Activated CD8-positive, alpha-beta T cell treated with anti-CD3 and anti-CD28 coated beads for 36 hours (primary cell): ENCODE measurements at regions of chr15 and their contacts with region 1.

Region 1: GRCh38 chr15:59528965-59529402 is 82.6 kb upstream of the GCNT3 start:
- DNase-seq: peak; percentile 79
- ATAC-seq: peak; percentile 87
- H3K4me3 Mint-ChIP-seq: no peak overlapping the region
- H3K27ac Mint-ChIP-seq: no peak overlapping the region
- H3K4me1 Mint-ChIP-seq: peaks cover 13% of the 10 kb centered on the region
- H3K27me3 Mint-ChIP-seq: no peaks in the 10 kb centered on the region
- CTCF ChIP-seq: peak; percentile 93

Region 2: GRCh38 chr15:58957101-58957973 is 571.6 kb before region 1 on chr15:
- CTCF ChIA-PET with region 1: interaction called, 12 read pairs
- POLR2A ChIA-PET with region 1: no interaction called
- intact Hi-C with region 1: no loop called
- DNase-seq: peak; percentile 72
- ATAC-seq: peak; percentile 97
- H3K4me3 Mint-ChIP-seq: no peak overlapping the region
- H3K27ac Mint-ChIP-seq: no peak overlapping the region
- H3K4me1 Mint-ChIP-seq: peaks cover 9% of the 10 kb centered on the region
- H3K27me3 Mint-ChIP-seq: no peaks in the 10 kb centered on the region
- CTCF ChIP-seq: peak; percentile 86

Region 3: GRCh38 chr15:59444980-59445545 is 83.9 kb before region 1 on chr15:
- CTCF ChIA-PET with region 1: no interaction called
- POLR2A ChIA-PET with region 1: no interaction called
- intact Hi-C with region 1: no loop called
- DNase-seq: no peak
- ATAC-seq: no peak
- H3K4me3 Mint-ChIP-seq: no peak overlapping the region
- H3K27ac Mint-ChIP-seq: no peak overlapping the region
- H3K4me1 Mint-ChIP-seq: no peaks in the 10 kb centered on the region
- H3K27me3 Mint-ChIP-seq: peaks cover 2% of the 10 kb centered on the region
- CTCF ChIP-seq: no peak

Region 4: GRCh38 chr15:59492389-59493377 is 36.3 kb before region 1 on chr15:
- CTCF ChIA-PET with region 1: interaction called, 30 read pairs
- POLR2A ChIA-PET with region 1: no interaction called
- intact Hi-C with region 1: no loop called
- DNase-seq: peak; percentile 67
- ATAC-seq: peak; percentile 80
- H3K4me3 Mint-ChIP-seq: no peak overlapping the region
- H3K27ac Mint-ChIP-seq: no peak overlapping the region
- H3K4me1 Mint-ChIP-seq: no peaks in the 10 kb centered on the region
- H3K27me3 Mint-ChIP-seq: no peaks in the 10 kb centered on the region
- CTCF ChIP-seq: peak; percentile 84

Region 5: DNA sequence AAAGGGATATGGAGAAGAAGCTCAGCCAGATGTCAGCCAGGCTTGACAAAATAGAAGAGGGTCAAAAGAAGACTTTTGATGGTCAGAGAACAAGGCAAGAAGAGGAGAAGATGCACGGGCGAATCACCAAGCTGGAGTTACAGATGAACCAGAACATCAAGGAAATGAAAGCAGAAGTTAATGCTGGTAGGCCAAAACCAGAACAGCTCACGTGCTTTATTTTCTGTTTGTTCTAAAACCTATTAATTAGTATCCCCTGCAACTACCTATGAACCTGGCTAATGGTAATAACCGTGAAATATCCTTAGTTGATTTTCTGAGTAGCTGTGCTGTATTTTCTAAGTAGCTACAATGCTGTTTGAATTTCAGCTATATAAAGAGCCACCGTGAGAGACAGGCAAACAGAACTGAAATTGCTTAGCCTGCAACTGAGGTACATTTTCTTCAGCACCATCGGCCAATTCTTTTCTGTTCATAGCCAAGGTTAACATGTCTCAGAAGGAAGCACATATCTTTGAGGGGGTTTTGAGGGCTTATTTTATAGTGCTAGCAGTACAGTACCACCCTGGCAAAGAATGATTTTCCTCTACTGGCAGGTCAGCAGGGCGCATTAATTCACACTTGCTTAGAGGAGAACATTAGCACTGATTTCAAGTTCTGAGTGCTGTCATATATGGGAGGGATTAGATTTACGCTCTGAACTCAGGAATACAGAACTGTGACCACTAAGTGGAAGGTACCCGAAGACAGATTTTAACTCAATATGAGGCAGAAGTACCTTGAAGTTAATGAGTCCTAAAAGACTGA is 12.1 kb before region 1 on chr15:
- CTCF ChIA-PET with region 1: interaction called, 38 read pairs
- POLR2A ChIA-PET with region 1: interaction called, 4 read pairs
- intact Hi-C with region 1: no loop called
- DNase-seq: no peak
- ATAC-seq: no peak
- H3K4me3 Mint-ChIP-seq: no peak overlapping the region
- H3K27ac Mint-ChIP-seq: no peak overlapping the region
- H3K4me1 Mint-ChIP-seq: no peaks in the 10 kb centered on the region
- H3K27me3 Mint-ChIP-seq: peaks cover 2% of the 10 kb centered on the region
- CTCF ChIP-seq: no peak

Region 6: DNA sequence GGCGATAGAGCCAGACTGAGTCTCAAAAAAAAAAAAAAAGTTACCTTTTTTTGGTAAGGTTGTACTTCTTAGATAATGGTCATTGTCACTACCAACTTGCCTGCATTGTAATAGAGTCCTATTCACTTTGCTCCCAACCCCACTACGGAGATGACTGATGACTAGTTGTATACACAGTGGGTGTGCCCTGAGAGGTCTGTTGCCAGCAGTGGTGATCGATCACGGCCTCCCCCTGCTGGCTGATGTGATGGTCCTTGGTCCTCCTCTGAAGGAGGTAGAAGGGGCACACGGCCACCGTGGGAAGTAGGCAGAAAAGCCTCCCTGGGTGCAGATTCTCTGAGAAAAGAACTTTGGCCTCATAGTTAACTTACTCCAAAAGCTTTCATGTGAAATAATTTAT is 93.3 kb after region 1 on chr15:
- CTCF ChIA-PET with region 1: interaction called, 16 read pairs
- POLR2A ChIA-PET with region 1: no interaction called
- intact Hi-C with region 1: loop called (anchors 5 kb)
- DNase-seq: peak; percentile 76
- ATAC-seq: peak; percentile 93
- H3K4me3 Mint-ChIP-seq: no peak overlapping the region
- H3K27ac Mint-ChIP-seq: no peak overlapping the region
- H3K4me1 Mint-ChIP-seq: no peaks in the 10 kb centered on the region
- H3K27me3 Mint-ChIP-seq: no peaks in the 10 kb centered on the region
- CTCF ChIP-seq: peak; percentile 47

Region 7: DNA sequence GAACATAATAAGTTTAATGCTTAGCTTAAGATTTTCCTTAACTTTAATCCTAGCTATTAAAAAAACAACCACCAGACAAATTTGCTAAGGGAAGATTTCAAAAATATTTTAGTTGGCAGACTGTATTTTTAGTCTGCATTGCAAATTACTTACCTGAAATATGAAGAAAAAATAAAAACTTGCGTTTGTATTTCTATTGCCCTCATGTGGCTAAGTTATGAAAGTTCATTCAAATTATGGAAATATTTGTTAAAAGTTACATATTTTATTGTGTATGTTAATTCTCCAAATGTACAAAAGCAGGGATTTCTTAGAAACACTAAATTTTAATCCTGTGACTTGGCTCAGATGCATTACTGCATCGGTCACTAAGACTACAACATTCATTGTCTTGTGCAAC is 113.4 kb after region 1 on chr15:
- CTCF ChIA-PET with region 1: interaction called, 26 read pairs
- POLR2A ChIA-PET with region 1: interaction called, 4 read pairs
- intact Hi-C with region 1: no loop called
- DNase-seq: no peak
- ATAC-seq: no peak
- H3K4me3 Mint-ChIP-seq: no peak overlapping the region
- H3K27ac Mint-ChIP-seq: peak overlapping the region; percentile 1
- H3K4me1 Mint-ChIP-seq: peaks cover 11% of the 10 kb centered on the region
- H3K27me3 Mint-ChIP-seq: no peaks in the 10 kb centered on the region
- CTCF ChIP-seq: no peak

Region 8: DNA sequence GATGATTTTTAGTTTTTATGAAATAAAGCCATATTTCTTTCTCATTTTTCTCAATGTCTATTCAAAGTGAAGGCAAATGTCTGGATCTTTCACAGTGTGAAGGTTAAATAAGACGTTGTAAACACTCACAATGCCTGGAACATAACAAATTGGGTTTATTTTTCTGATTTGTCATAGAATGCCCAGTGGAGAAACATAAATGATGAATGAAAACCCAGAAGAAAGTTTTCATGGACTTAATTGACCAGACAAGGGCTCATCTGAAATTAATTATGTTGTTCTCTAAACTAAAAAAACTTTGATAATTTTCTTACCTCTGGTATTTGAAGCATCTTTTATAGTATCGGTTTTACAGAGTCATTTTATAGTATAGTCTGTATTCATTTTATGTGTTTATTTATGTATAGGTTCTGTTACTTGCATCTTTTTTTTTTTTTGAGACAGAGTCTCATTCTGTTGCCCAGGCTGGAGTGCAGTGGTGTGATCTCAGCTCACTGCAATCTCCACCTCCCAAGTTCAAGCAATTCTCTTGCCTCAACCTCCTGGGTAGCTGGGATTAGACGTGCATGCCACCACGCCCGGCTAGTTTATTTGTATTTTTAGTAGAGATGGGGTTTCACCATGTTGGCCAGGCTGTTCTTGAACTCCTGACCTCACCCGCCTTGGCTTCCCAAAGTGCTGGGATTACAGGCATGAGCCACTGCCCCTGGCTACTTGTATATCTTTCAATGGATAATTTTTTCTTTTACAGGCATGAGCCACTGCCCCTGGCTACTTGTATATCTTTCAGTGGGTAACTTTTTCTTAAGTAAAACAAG is 175.2 kb after region 1 on chr15:
- CTCF ChIA-PET with region 1: no interaction called
- POLR2A ChIA-PET with region 1: no interaction called
- intact Hi-C with region 1: no loop called
- DNase-seq: no peak
- ATAC-seq: no peak
- H3K4me3 Mint-ChIP-seq: no peak overlapping the region
- H3K27ac Mint-ChIP-seq: no peak overlapping the region
- H3K4me1 Mint-ChIP-seq: no peaks in the 10 kb centered on the region
- H3K27me3 Mint-ChIP-seq: no peaks in the 10 kb centered on the region
- CTCF ChIP-seq: no peak